ENCODE measurements at regions of chr13 and their contacts with region 1.

Region 1: DNA sequence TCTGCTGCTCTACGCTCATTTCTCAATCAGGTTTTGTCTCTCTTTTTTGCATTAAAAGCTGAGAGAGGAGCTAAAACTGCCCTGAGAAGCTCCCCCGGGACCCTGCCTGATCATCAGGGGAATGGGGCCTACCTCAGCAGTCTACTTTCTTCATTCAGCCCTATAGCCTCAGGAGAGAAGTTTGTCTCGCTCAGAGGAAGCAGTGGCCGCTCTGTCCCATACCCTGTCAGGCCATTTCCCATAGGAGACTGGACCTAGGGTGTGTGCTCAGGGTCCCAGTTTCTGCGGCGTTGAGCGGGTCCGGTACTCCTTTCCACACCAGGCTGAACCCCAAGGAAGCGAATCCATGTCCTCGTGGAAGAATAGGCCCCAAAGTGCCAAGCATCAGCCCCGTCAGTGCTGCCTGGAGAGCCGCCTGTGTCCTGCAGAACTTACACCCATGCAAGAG is 21.7 kb downstream of the UBE2L5 start:
- DNase-seq: no peak
- ATAC-seq: no peak
- H3K4me3 ChIP-seq: no peak overlapping the region
- H3K27ac ChIP-seq: no peak overlapping the region
- H3K4me1 ChIP-seq: peaks cover 0 to 19% (median 11%) of the 10 kb centered on the region in 12 donors
- H3K27me3 ChIP-seq: no peaks in the 10 kb centered on the region
- CTCF ChIP-seq: no peak
- POLR2A ChIP-seq: no peak

Region 2: GRCh38 chr13:30355384-30355699 is 88.6 kb before region 1 on chr13:
- intact Hi-C with region 1: loop called in 1 of 10 experiments (anchors 10 kb)
- DNase-seq: peak in 1 of 5 donors; percentile 37
- ATAC-seq: peak in 2 of 4 donors; percentile 57 to 73
- H3K4me3 ChIP-seq: no peak overlapping the region
- H3K27ac ChIP-seq: no peak overlapping the region
- H3K4me1 ChIP-seq: peaks cover 0 to 9% (median 0%) of the 10 kb centered on the region in 12 donors
- H3K27me3 ChIP-seq: no peaks in the 10 kb centered on the region
- CTCF ChIP-seq: peak; percentile 43 to 59 (median 51)
- POLR2A ChIP-seq: no peak

Region 3: GRCh38 chr13:30465585-30466357 is 21.8 kb after region 1 on chr13 and contains the start of gene HMGB1:
- intact Hi-C with region 1: no loop called
- DNase-seq: peak; percentile 98 to 99 (median 99)
- ATAC-seq: peak; percentile 96 to 99 (median 98)
- H3K4me3 ChIP-seq: peak within 1 kb of the TSS; percentile 70 to 99 (median 94)
- H3K27ac ChIP-seq: peak within 1 kb of the TSS; percentile 98 to 100 (median 100)
- H3K4me1 ChIP-seq: peaks cover 2 to 39% (median 29%) of the 10 kb centered on the region in 12 donors
- H3K27me3 ChIP-seq: no peaks in the 10 kb centered on the region
- CTCF ChIP-seq: no peak
- POLR2A ChIP-seq: peak; percentile 94 to 98
- total RNA-seq, gene HMGB1: 137 to 215 (median 164) TPM

Measured in heart left ventricle (tissue), 16 donors.